Activated CD4-positive, alpha-beta T cell treated with anti-CD3 and anti-CD28 coated beads, Interleukin-2, amount 10 ng/mL, durations not matched to agents 24 days and 14 days (primary cell): ENCODE measurements at regions of chr17 and their contacts with region 1.

Region 1: DNA sequence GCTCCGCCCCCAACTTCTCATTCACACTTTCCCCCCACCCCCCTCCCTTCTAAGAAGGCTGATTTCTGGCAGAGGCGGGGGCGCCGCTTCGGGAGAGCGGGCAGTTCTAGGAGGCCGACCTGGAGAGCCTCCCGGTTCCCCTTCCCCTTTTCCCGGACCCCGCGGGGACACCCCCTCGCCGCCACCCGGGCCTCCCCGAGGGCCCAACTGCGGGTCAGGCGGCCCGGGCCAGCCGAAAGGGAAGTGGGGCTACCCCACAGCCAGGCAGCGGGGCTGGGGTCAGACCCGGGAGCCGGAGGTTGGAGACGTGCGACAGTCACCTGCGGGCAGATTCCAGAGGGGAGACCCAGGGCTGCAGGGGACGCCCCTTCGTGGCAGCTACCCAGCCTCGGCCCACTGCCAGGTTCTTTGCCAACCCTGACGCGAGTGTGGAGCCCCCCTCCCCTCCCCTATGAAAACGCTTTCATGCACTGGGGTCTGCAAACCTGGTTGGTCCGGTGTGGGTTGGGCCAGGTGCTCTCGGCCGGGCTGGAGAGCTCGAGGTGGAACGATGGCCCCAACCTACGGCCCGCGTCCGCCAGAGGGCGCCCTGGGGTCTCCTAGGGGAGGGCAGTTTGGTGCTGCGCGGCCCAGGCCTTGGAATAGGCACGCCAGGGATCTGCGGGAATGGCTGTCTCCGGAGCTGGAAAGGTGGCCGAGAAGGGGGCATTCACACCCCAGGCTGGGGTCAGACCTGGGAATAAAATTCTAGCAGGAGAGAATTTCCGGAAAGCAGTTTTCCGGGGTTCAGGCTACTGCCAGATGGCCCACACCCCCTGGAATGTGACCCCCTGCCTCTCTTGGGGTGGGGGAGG is 721 bp upstream of the SOCS3 start:
- DNase-seq: peak; percentile 98
- H3K4me3 Mint-ChIP-seq: peak overlapping the region; percentile 92
- H3K27ac Mint-ChIP-seq: peak overlapping the region; percentile 94
- H3K4me1 Mint-ChIP-seq: peaks cover 39% of the 10 kb centered on the region
- H3K27me3 Mint-ChIP-seq: no peaks in the 10 kb centered on the region

Region 2: GRCh38 chr17:78128551-78129350 is 231.8 kb before region 1 on chr17 and contains the start of gene TMC6:
- intact Hi-C with region 1: loop called (anchors 5 kb)
- DNase-seq: peak; percentile 91
- H3K4me3 Mint-ChIP-seq: peak within 1 kb of the TSS; percentile 99
- H3K27ac Mint-ChIP-seq: peak within 1 kb of the TSS; percentile 97
- H3K4me1 Mint-ChIP-seq: peaks cover 52% of the 10 kb centered on the region
- H3K27me3 Mint-ChIP-seq: no peaks in the 10 kb centered on the region
- total RNA-seq, gene TMC6: 250 and 251 TPM in 2 replicates

Region 3: GRCh38 chr17:78289802-78290363 is 70.7 kb before region 1 on chr17:
- intact Hi-C with region 1: loop called (anchors 2 kb)
- DNase-seq: peak; percentile 92
- H3K4me3 Mint-ChIP-seq: no peak overlapping the region
- H3K27ac Mint-ChIP-seq: no peak overlapping the region
- H3K4me1 Mint-ChIP-seq: peaks cover 7% of the 10 kb centered on the region
- H3K27me3 Mint-ChIP-seq: no peaks in the 10 kb centered on the region

Region 4: GRCh38 chr17:78307872-78308638 is 52.5 kb before region 1 on chr17:
- intact Hi-C with region 1: no loop called
- DNase-seq: no peak
- H3K4me3 Mint-ChIP-seq: no peak overlapping the region
- H3K27ac Mint-ChIP-seq: peak overlapping the region; percentile 30
- H3K4me1 Mint-ChIP-seq: peaks cover 8% of the 10 kb centered on the region
- H3K27me3 Mint-ChIP-seq: peaks cover 12% of the 10 kb centered on the region

Region 5: DNA sequence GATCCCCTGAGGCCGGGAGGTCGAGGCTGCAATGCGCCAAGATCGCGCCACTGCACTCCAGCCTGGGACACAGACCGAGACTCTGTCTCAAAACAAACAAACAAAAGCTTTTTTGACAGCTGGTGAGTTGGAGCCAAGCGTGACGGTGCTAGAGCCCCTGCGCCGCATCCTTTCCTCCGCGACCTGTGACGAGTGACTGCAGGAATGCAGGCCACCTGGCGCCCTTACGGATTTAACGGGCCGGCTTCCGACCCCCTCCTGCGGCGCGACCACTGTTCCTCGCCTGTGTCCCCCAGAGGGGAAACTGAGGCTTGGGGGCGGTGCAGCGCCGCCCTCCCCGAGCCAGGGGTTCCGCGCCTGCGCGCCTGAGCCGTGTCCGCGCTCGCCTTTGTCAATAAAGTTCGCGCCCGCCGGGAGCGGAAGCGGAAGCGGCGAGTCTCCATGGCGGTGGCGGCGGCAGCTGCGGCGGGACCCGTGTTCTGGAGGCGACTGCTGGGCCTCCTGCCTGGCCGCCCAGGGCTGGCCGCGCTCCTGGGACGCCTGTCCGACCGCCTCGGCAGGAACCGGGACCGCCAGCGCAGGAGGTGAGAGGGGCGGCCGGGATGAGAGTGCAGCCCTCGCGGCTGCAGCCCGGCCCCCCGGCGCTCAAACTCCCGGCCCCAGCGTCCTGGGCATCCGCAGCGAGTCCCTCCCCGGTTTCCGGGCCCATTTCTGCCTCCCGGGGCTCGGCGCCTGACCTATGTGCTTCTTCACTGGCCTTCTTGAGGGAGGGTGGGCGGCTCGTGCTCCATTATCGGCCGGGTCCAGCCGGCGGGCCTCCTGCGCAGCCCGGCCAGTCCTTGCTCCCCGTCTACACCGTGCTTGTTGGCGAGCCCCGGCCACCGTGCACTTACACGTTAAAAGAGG is 17.9 kb after region 1 on chr17 and contains the start of gene PGS1:
- intact Hi-C with region 1: loop called (anchors 1 kb)
- DNase-seq: peak; percentile 97
- H3K4me3 Mint-ChIP-seq: peak within 1 kb of the TSS; percentile 92
- H3K27ac Mint-ChIP-seq: peak within 1 kb of the TSS; percentile 88
- H3K4me1 Mint-ChIP-seq: peaks cover 45% of the 10 kb centered on the region
- H3K27me3 Mint-ChIP-seq: no peaks in the 10 kb centered on the region
- total RNA-seq, gene PGS1: 65.6 and 67.8 TPM in 2 replicates

Region 6: GRCh38 chr17:78412403-78412802 is 51.8 kb after region 1 on chr17:
- intact Hi-C with region 1: no loop called
- DNase-seq: peak; percentile 86
- H3K4me3 Mint-ChIP-seq: peak overlapping the region; percentile 85
- H3K27ac Mint-ChIP-seq: peak overlapping the region; percentile 95
- H3K4me1 Mint-ChIP-seq: peaks cover 84% of the 10 kb centered on the region
- H3K27me3 Mint-ChIP-seq: no peaks in the 10 kb centered on the region

Region 7: DNA sequence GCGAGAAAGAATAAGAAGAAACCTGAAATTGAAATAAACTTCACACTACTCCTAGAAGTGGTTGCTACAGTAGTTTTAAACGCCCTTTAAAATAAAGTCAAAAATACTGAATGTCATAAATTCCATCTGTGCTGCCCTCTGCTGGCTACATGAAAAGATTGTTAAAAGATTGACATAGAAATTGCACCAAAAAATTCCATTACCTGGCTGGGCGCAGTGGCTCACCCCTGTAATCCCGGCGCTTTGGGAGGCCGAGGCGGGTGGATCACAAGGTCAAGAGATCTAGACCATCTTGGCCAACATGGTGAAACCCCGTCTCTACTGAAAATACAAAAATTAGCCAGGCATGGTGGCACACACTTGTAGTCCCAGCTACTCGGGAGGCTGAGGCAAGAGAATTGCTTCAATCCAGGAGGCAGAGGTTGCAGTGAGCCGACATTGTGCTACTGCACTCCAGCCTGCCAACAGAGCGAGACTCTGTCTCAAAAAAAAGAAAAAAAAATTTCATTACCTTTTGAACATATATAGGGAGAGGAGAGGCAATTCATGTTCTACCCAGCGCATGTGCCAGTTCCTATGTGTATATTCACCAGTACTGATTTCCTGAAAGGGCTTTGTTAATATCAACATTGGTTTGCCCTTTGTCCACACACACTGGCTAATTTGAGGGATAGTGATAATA is 384.9 kb after region 1 on chr17:
- intact Hi-C with region 1: loop called (anchors 5 kb)
- DNase-seq: peak; percentile 85
- H3K4me3 Mint-ChIP-seq: peak overlapping the region; percentile 57
- H3K27ac Mint-ChIP-seq: peak overlapping the region; percentile 75
- H3K4me1 Mint-ChIP-seq: peaks cover 80% of the 10 kb centered on the region
- H3K27me3 Mint-ChIP-seq: no peaks in the 10 kb centered on the region